Mammary epithelial cell (primary cell): ENCODE measurements at regions of chr3 and their contacts with region 1.

Region 1: GRCh38 chr3:183317886-183318865 is 65.1 kb downstream of the B3GNT5 start:
- DNase-seq: peak; percentile 51
- H3K4me3 ChIP-seq: no peak overlapping the region
- H3K27ac ChIP-seq: no peak overlapping the region
- H3K4me1 ChIP-seq: peaks cover 17% of the 10 kb centered on the region
- H3K27me3 ChIP-seq: no peaks in the 10 kb centered on the region
- CTCF ChIP-seq: no peak

Region 2: GRCh38 chr3:182954553-182955235 is 363.5 kb before region 1 on chr3:
- CTCF ChIA-PET with region 1: no interaction called
- dilution Hi-C with region 1: no loop called
- in situ Hi-C with region 1: no loop called
- intact Hi-C with region 1: no loop called
- DNase-seq: no peak
- H3K4me3 ChIP-seq: no peak overlapping the region
- H3K27ac ChIP-seq: no peak overlapping the region
- H3K4me1 ChIP-seq: no peaks in the 10 kb centered on the region
- H3K27me3 ChIP-seq: no peaks in the 10 kb centered on the region
- CTCF ChIP-seq: no peak

Region 3: DNA sequence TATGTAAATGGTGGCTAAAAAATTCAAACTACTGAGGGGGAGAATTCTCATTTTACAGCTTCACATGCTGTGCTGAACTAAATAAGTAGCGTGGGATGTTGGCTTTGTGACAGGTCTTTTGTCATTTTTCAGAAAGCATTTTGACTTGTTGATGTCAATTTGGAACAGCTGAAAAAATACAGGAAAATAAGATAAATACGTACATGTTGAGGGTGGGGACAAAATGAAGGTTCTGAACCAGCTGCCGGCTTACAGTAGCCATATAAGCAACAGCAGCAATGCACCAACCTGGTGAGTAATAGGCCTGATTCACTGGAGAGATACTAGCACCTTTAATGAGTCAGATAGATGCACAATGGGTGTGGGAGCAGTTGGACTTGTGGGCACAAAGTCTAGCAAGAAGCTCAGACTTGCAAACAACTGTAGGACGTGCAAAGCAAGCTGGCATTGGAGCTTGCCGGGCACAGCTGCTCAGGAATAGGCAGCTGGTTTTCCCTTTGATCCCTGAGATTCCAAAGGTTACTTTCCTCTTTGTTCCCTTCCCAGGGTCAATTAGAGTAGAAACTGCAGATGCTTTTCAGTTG is 52.2 kb before region 1 on chr3:
- CTCF ChIA-PET with region 1: no interaction called
- dilution Hi-C with region 1: loop called (anchors 5 kb)
- in situ Hi-C with region 1: no loop called
- intact Hi-C with region 1: no loop called
- DNase-seq: peak; percentile 99
- H3K4me3 ChIP-seq: no peak overlapping the region
- H3K27ac ChIP-seq: peak overlapping the region; percentile 94
- H3K4me1 ChIP-seq: peaks cover 58% of the 10 kb centered on the region
- H3K27me3 ChIP-seq: no peaks in the 10 kb centered on the region
- CTCF ChIP-seq: no peak

Region 4: GRCh38 chr3:183381179-183381578 is 63.0 kb after region 1 on chr3:
- CTCF ChIA-PET with region 1: no interaction called
- dilution Hi-C with region 1: no loop called
- in situ Hi-C with region 1: no loop called
- intact Hi-C with region 1: no loop called
- DNase-seq: peak; percentile 80
- H3K4me3 ChIP-seq: no peak overlapping the region
- H3K27ac ChIP-seq: peak overlapping the region; percentile 47
- H3K4me1 ChIP-seq: peaks cover 35% of the 10 kb centered on the region
- H3K27me3 ChIP-seq: no peaks in the 10 kb centered on the region
- CTCF ChIP-seq: no peak